GM18951 (cell line): ENCODE measurements at regions of chr2 and their contacts with region 1.

Region 1: GRCh38 chr2:45643543-45644542 is 7.6 kb upstream of the PRKCE start:
- POLR2A ChIP-seq: no peak

Region 2: DNA sequence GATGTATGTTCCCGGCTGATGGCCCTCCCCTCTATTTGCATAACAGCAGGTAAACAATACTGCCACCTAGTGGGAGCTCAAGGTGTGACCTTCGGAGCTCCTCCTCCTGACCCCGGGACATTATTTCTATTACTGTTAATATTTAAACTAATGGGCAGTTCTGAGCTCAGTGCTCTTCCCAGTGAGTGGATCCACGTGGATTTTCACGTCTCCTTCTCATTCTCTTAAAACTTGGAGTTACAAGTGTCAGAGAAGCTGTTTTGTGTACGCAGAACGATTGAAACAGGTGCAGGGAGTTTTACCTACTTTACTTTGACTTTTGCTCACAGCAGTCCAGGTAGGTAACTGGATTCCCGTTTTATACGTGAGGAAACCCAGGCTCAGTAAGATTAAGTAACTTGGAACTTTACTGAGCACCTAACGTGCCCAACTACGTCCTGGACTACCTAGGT is 134.9 kb after region 1 on chr2:
- in situ Hi-C with region 1: loop called (anchors 10 kb)
- POLR2A ChIP-seq: no peak

Region 3: DNA sequence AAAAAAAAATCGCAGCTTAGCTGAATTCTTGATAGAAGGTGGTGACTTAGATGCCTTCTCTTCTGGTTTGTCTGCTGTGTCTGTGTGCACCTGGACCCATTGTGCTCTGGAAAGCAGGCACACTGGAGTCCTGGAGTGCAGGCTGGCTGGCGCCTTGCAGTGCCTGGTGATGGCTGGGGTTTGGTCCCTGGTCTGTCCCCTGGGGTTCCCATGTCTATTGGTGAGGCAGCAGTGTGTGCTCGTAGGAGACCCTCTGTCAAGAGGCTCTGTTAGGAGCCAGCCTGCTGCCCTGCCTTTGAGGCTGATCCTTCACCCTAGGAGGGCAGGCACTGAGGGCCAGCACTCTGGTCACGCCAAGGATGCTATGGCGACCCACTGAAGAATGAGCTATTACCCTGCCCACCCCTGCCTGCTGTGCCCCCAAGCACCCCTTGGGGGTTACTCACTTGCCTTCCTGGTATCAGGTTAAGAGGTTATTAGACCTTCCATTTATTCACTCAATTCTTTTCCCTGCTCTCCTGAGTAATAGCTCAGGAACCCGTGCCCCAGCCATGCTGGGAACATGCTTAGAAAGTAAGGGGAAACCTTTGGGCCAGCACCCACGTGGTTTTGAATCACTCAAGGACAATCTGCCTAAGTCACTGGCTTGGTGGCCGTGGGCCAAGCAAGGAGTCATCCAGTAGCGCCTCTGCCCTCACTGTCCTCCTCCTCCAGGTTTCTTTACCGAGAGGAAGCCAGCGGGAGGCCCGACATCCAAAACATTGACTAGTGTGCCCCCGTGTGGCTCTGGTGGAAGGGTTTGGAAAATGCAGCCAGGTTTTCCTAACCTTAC is 292.2 kb after region 1 on chr2:
- in situ Hi-C with region 1: loop called (anchors 10 kb)
- POLR2A ChIP-seq: no peak